ENCODE measurements at regions of chr17 and their contacts with region 1.

Region 1: DNA sequence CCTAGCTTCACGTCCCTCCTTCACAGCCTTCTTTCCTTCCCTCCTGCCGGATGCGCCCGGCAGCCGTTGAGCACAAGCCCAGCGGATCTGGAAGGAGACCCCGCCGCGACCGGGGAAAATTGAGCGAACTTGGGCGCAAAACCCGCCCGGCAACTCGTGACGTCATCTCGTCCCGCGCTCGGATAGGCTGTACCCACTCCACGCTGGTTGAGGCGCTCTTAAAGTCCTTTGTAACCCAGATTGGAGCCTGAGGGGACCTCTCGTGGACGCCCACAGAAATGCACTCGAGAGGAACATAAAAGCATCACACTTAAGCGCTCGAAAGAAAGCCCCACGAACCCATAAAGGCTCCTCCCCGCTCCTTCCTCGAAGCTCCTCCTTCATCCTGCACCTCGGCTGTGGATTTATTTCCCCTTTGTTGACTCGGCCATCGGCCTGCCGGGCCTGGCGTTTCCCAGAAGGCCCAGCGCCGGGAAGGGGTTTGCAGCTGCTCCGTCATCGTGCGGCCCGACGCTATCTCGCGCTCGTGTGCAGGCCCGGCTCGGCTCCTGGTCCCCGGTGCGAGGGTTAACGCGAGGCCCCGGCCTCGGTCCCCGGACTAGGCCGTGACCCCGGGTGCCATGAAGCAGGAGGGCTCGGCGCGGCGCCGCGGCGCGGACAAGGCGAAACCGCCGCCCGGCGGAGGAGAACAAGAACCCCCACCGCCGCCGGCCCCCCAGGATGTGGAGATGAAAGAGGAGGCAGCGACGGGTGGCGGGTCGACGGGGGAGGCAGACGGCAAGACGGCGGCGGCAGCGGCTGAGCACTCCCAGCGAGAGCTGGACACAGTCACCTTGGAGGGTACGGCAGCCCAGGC is at the start of gene PSMD3:
- DNase-seq: peak; percentile 95 to 100 (median 97)
- ATAC-seq: peak; percentile 94
- H3K4me3 ChIP-seq: peak within 1 kb of the TSS; percentile 67 to 83
- H3K4me3 Mint-ChIP-seq: peak within 1 kb of the TSS; percentile 93
- H3K27ac ChIP-seq: peak within 1 kb of the TSS; percentile 90 to 91
- H3K27ac Mint-ChIP-seq: peak within 1 kb of the TSS; percentile 97
- H3K4me1 ChIP-seq: peaks cover 25% of the 10 kb centered on the region
- H3K4me1 Mint-ChIP-seq: peaks cover 33% of the 10 kb centered on the region
- H3K27me3 ChIP-seq: peaks cover 0 to 3% of the 10 kb centered on the region in 2 experiments
- H3K27me3 Mint-ChIP-seq: no peaks in the 10 kb centered on the region
- CTCF ChIP-seq: peak; percentile 67
- total RNA-seq, gene PSMD3: 66.9 to 68.8 TPM

Region 2: DNA sequence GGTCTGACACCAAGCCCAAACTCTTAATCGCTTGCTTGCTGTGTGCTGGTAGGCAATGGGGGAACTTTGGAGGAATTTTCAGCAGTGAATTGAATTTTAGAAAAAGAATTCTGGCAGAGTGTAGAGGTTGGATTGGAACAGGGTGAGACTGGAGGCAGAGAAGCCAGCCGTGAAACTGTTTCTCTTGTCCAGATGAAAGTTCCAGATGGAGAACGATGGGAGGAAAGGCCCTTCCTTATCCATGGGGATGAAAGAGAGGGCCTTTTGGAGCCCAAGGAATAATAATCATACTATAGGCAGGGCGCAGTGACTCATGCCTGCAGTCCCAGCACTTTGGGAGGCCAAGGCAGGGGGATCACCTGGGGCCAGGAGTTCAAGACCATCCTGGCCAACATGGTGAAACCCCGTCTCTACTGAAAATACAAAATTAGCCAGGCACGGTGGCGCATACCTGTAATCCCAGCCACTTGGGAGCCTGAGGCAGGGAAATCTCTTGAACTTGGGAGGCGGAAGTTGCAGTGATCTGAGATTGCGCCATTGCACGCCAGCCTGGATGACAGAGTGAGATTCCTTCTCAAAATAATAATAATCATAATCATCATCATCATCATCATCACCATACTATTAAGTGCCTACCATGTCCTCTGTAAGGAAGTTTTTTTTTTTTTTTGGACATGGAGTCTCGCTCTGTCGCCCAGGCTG is 398.7 kb before region 1 on chr17:
- CTCF ChIA-PET with region 1: no interaction called
- POLR2A ChIA-PET with region 1: no interaction called
- intact Hi-C with region 1: no loop called
- DNase-seq: no peak
- ATAC-seq: no peak
- H3K4me3 ChIP-seq: no peak overlapping the region
- H3K4me3 Mint-ChIP-seq: no peak overlapping the region
- H3K27ac ChIP-seq: no peak overlapping the region
- H3K27ac Mint-ChIP-seq: no peak overlapping the region
- H3K4me1 ChIP-seq: no peaks in the 10 kb centered on the region
- H3K4me1 Mint-ChIP-seq: no peaks in the 10 kb centered on the region
- H3K27me3 ChIP-seq: no peaks in the 10 kb centered on the region
- H3K27me3 Mint-ChIP-seq: peaks cover 2% of the 10 kb centered on the region
- CTCF ChIP-seq: no peak

Region 3: GRCh38 chr17:39636927-39637736 is 343.4 kb before region 1 on chr17 and contains the start of gene STARD3:
- CTCF ChIA-PET with region 1: interaction called, 5 read pairs
- POLR2A ChIA-PET with region 1: no interaction called
- intact Hi-C with region 1: loop called in 1 of 2 experiments (anchors 5 kb)
- DNase-seq: peak; percentile 78 to 95 (median 92)
- ATAC-seq: peak; percentile 85
- H3K4me3 ChIP-seq: peak within 1 kb of the TSS; percentile 85 to 97
- H3K4me3 Mint-ChIP-seq: peak within 1 kb of the TSS; percentile 93
- H3K27ac ChIP-seq: peak within 1 kb of the TSS; percentile 86 to 94
- H3K27ac Mint-ChIP-seq: peak within 1 kb of the TSS; percentile 97
- H3K4me1 ChIP-seq: peaks cover 47% of the 10 kb centered on the region
- H3K4me1 Mint-ChIP-seq: peaks cover 64% of the 10 kb centered on the region
- H3K27me3 ChIP-seq: no peaks in the 10 kb centered on the region
- H3K27me3 Mint-ChIP-seq: no peaks in the 10 kb centered on the region
- CTCF ChIP-seq: no peak
- total RNA-seq, gene STARD3: 102 to 118 TPM

Region 4: GRCh38 chr17:39730095-39730921 is 250.3 kb before region 1 on chr17 and contains the start of gene MIEN1:
- CTCF ChIA-PET with region 1: no interaction called
- POLR2A ChIA-PET with region 1: interaction called, 5 read pairs
- intact Hi-C with region 1: loop called (anchors 1 kb)
- DNase-seq: peak; percentile 89 to 99 (median 95)
- ATAC-seq: peak; percentile 93
- H3K4me3 ChIP-seq: peak within 1 kb of the TSS; percentile 64 to 72
- H3K4me3 Mint-ChIP-seq: peak within 1 kb of the TSS; percentile 90
- H3K27ac ChIP-seq: peak within 1 kb of the TSS; percentile 78 to 91
- H3K27ac Mint-ChIP-seq: peak within 1 kb of the TSS; percentile 94
- H3K4me1 ChIP-seq: peaks cover 17% of the 10 kb centered on the region
- H3K4me1 Mint-ChIP-seq: peaks cover 17% of the 10 kb centered on the region
- H3K27me3 ChIP-seq: no peaks in the 10 kb centered on the region
- H3K27me3 Mint-ChIP-seq: no peaks in the 10 kb centered on the region
- CTCF ChIP-seq: peak; percentile 98
- total RNA-seq, gene MIEN1: 29.5 to 30.1 TPM

Region 5: DNA sequence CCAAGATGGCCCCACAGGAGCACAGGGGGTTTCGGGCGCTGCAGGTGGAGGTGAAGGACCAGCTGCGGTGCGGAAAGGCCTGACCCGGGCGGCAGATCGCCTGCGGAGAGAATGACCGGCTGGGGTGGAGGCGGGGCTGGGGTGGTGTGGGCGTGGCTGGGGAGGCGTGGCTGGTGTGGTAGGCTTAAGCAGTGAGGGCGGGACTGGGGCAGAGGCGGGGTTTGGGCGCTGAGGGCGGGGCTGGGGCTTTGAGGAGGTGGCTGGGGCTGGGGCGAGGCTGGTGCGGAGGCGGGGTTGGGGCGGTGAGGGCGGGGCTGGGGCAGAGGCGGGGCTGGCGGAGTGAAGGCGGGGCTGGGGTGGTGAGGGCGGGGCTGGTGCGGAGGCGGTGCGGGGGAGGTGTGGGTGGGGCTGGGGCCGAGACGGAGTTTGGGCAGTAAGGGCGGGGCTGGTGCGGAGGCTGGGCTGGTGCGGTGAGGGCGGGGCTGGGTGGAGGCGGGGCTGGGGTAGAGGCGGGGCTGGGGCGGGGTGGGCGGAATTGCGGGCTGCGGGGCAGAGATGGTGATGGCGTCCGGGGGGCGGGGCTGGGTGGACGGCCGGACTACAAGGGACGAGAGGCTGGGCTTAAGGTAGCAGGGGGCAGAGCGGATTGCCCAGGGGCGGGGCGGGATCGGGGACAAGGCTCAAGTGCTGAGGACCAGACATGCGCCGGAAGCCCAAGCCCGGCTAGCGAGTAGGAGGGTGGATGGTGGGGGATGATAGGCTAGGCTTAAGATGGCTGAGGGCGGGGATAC is 27.7 kb before region 1 on chr17:
- CTCF ChIA-PET with region 1: interaction called, 204 read pairs
- POLR2A ChIA-PET with region 1: interaction called, 18 read pairs
- intact Hi-C with region 1: loop called (anchors 1 kb)
- DNase-seq: peak; percentile 92 to 97 (median 95)
- ATAC-seq: peak; percentile 87
- H3K4me3 ChIP-seq: peak overlapping the region; percentile 66 to 80
- H3K4me3 Mint-ChIP-seq: peak overlapping the region; percentile 86
- H3K27ac ChIP-seq: peak overlapping the region; percentile 51 to 74
- H3K27ac Mint-ChIP-seq: peak overlapping the region; percentile 89
- H3K4me1 ChIP-seq: peaks cover 26% of the 10 kb centered on the region
- H3K4me1 Mint-ChIP-seq: peaks cover 22% of the 10 kb centered on the region
- H3K27me3 ChIP-seq: no peaks in the 10 kb centered on the region
- H3K27me3 Mint-ChIP-seq: no peaks in the 10 kb centered on the region
- CTCF ChIP-seq: no peak

Region 6: DNA sequence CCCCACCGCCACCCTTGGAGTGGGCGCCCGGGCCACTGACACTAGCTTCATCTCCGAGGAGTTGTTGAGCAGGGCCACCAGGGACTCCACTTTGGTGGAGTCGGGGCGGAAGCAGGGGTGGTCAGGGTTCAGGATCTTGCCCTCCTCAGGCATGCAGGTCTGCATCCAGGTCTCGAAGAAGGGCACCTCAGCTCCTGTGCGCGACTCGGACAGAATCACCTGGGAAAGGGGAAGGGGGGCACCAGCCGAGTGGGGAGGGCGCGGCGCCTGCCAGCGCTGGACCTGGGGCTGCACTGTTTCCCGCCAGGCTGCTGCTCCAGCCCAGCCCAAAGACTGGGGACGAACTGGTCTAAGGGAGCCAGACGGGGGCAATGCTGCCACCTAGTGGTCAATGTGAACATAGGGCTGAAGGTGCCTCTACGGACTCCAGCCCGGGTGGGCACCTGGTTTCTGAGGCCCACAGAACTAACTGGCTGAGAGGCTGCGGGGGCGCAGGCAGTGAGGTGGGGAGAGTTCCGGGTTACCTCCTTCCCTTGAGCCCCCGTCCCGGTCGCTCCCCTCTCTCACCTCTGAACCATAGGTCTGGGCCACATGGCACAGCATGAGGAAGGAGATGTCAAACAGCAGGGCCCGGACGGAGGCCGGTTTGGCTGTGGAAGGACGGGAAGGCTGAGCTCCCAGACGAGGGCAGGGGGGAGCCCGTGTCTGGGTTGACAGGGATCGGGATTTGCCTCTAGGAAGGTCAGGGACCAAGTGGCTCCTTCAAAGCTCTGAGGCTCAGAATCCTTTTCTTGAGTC is 46.4 kb after region 1 on chr17:
- CTCF ChIA-PET with region 1: interaction called, 4 read pairs
- POLR2A ChIA-PET with region 1: interaction called, 3 read pairs
- intact Hi-C with region 1: loop called in 1 of 2 experiments (anchors 1 kb)
- DNase-seq: peak; percentile 45 to 87 (median 78)
- ATAC-seq: peak; percentile 88
- H3K4me3 ChIP-seq: no peak overlapping the region
- H3K4me3 Mint-ChIP-seq: no peak overlapping the region
- H3K27ac ChIP-seq: no peak overlapping the region
- H3K27ac Mint-ChIP-seq: no peak overlapping the region
- H3K4me1 ChIP-seq: peaks cover 21% of the 10 kb centered on the region
- H3K4me1 Mint-ChIP-seq: peaks cover 22% of the 10 kb centered on the region
- H3K27me3 ChIP-seq: no peaks in the 10 kb centered on the region
- H3K27me3 Mint-ChIP-seq: no peaks in the 10 kb centered on the region
- CTCF ChIP-seq: peak; percentile 79

Region 7: DNA sequence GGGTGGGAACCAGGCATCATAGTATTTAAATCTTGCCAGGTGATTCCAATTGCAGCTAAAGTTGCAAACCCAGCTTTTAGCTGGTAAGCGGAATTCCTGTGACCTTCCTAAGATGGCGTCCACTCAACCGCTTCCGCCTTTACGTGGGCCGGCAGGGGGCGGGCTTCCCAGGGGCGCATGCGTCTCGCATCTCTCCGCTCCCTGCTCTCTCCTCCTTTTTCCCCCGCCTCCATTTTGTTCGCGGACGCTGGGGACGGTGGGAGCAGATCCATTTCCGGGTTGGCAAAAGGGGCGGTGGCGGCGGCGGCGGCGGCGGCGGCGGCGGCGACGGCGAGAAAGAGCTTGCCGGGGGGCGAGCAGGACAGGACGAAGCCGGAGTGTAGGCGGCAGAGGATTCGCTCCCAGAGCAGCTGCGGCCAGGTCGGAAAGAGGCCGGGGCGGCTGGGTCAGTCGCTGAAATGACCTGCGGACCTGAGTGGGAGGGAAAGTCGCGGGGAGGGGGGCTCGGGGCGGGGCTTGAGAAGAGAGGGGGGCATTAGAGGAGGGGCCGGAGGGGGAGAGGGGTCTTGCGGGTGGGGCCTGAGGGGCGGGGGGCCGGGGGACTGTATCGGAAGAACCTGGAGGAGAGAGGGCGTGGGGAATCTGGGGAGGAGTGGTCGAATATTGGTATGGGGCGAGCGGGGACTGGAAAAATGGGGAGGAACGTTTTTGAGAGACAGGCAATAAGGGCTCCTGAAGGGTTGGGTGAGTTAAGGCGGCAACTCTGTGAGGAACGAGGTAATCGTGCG is 238.7 kb after region 1 on chr17 and contains the start of gene WIPF2:
- CTCF ChIA-PET with region 1: no interaction called
- POLR2A ChIA-PET with region 1: interaction called, 4 read pairs
- intact Hi-C with region 1: loop called (anchors 1 kb)
- DNase-seq: peak; percentile 92 to 98 (median 96)
- ATAC-seq: peak; percentile 90
- H3K4me3 ChIP-seq: peak within 1 kb of the TSS; percentile 83 to 87
- H3K4me3 Mint-ChIP-seq: peak within 1 kb of the TSS; percentile 95
- H3K27ac ChIP-seq: peak within 1 kb of the TSS; percentile 99
- H3K27ac Mint-ChIP-seq: peak within 1 kb of the TSS; percentile 100
- H3K4me1 ChIP-seq: peaks cover 8% of the 10 kb centered on the region
- H3K4me1 Mint-ChIP-seq: peaks cover 30% of the 10 kb centered on the region
- H3K27me3 ChIP-seq: no peaks in the 10 kb centered on the region
- H3K27me3 Mint-ChIP-seq: no peaks in the 10 kb centered on the region
- CTCF ChIP-seq: peak; percentile 53
- total RNA-seq, gene WIPF2: 26.8 to 30.8 TPM

Measured in CD8-positive, alpha-beta T cell (primary cell).